A549 (cell line): ENCODE measurements at regions of chr1 and their contacts with region 1.

Region 1: DNA sequence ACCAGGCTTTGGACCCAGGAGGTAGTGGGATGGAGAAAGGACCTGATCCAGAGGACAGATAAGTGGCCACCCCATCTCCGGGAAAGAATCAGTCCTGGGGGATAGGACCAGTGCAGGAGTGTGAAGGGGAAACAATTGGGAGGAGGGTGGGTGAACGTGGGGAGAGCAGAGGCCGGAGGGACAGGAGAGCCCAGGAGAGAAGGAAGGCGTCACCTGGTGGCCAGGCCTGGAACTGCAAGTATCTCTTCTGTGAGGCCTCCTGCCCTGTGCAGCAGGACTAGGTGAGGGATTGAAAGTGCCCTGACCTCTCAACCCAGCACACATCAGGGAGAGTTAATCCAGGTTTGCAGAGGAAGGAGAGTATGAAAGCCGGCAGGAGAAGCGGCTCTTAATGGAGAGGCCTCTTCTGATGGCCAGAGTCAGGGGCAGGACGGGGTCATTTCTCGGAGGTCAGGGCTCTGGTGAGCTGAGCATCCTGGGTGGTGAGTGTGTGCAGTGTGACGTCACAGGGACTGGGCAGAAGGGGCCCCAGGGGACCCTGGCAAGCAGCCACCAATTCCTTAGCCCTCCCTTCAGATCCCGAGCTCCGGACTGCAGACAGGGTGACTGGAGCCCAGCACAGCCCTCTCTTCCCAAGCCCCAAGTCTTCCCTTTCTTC is 9.2 kb upstream of the LAD1 start:
- DNase-seq: peak; percentile 80 to 93
- ATAC-seq: peak; percentile 74 to 91
- H3K4me3 ChIP-seq: no peak overlapping the region
- H3K27ac ChIP-seq: peak overlapping the region; percentile 82 to 92
- H3K4me1 ChIP-seq: peaks cover 57% of the 10 kb centered on the region
- CTCF ChIP-seq: peak; percentile 95
- EP300 ChIP-seq: no peak
- POLR2A ChIP-seq: no peak
- RAD21 ChIP-seq: peak; percentile 88

Region 2: DNA sequence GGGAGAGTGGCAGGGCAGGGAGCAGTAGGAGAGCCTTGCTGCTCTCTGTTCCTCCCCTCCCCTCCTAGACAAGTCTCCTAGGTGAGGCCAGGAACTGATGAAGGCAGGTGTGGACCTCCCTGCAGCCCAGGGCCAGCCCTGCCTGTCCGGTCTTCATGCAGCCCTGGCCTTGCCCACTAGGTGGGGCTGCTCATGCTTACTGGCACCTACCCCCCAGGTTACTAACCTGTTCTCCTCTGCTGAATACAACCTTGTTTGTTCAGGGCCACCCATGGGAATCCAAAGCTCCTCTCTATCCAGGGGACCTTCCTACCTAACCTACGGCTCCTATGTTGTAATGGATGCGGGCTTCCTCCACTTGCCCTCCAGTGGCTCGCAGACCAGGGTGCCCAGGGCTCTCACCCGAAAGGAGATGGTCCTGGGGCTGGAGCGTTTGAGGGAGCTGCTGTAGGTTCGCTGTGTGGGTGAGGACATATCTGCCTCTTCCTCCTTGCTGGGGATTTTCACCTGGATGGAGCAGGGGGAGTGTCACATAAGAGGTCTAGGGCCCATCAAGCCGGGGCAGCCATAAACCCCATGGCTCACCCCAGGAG is 22.9 kb before region 1 on chr1:
- CTCF ChIA-PET with region 1: interaction called, 334 read pairs
- POLR2A ChIA-PET with region 1: no interaction called
- DNase-seq: peak; percentile 61 to 76
- ATAC-seq: peak; percentile 85 to 95
- H3K4me3 ChIP-seq: no peak overlapping the region
- H3K27ac ChIP-seq: peak overlapping the region; percentile 63 to 77
- H3K4me1 ChIP-seq: peaks cover 32% of the 10 kb centered on the region
- CTCF ChIP-seq: peak; percentile 93
- EP300 ChIP-seq: no peak
- POLR2A ChIP-seq: no peak
- RAD21 ChIP-seq: peak; percentile 81 to 84

Region 3: DNA sequence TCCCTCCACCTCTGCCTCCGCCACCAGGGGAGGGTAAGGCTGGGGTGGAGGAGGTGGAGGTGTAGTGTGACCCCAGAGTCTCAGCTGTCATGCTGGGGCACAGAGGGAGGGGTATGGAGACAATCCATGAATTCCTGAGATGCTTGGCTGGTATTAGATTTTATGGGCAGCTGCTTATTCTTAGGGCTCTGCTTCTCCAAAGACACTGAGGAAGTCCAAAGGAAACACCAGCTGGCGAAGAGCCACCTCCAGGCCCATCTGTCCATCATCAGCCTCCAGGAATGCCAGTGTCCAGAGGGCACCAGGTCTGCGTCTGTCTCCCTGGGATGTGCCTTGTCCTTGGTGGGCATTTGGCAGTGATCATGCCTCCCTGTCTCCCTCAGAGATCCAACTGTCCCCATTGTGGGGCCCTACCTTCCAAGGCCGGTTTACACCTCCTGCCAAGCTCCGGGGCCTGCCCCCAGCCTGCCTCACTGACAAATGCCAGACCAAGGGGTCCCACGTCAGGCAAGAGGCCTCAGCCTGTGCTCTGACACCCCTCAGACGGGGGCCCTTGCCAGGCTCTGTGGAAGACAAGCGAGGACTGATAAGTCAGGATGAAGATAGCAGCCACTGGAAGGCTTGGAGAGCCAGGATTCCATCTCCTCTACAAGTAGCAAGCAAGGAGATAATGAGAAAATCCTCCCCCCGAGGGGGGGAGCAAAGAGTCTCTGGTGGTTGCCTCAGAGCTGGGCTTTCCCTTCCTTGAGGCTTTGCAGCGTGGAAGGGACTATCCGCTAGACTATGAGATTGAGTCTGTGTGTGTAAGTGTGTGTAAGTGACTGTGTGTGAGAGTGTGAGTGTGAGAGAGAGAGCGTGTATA is 11.7 kb after region 1 on chr1:
- CTCF ChIA-PET with region 1: interaction called, 26 read pairs
- POLR2A ChIA-PET with region 1: no interaction called
- DNase-seq: no peak
- ATAC-seq: no peak
- H3K4me3 ChIP-seq: no peak overlapping the region
- H3K27ac ChIP-seq: no peak overlapping the region
- H3K4me1 ChIP-seq: no peaks in the 10 kb centered on the region
- CTCF ChIP-seq: no peak
- EP300 ChIP-seq: no peak
- POLR2A ChIP-seq: no peak
- RAD21 ChIP-seq: no peak

Region 4: GRCh38 chr1:201602413-201603265 is 194.3 kb after region 1 on chr1:
- CTCF ChIA-PET with region 1: no interaction called
- POLR2A ChIA-PET with region 1: no interaction called
- DNase-seq: peak; percentile 64 to 80
- ATAC-seq: peak; percentile 80 to 89
- H3K4me3 ChIP-seq: no peak overlapping the region
- H3K27ac ChIP-seq: peak overlapping the region; percentile 89 to 90
- H3K4me1 ChIP-seq: peaks cover 85% of the 10 kb centered on the region
- CTCF ChIP-seq: no peak
- EP300 ChIP-seq: peak; percentile 53 to 76; a peak in 3 of 5 replicates
- POLR2A ChIP-seq: no peak
- RAD21 ChIP-seq: 0 out of 5 replicates have a peak, but pooled peaks have one; percentile 4 to 19